CD4-positive, alpha-beta T cell (primary cell): ENCODE measurements at regions of chr1 and their contacts with region 1.

Region 1: DNA sequence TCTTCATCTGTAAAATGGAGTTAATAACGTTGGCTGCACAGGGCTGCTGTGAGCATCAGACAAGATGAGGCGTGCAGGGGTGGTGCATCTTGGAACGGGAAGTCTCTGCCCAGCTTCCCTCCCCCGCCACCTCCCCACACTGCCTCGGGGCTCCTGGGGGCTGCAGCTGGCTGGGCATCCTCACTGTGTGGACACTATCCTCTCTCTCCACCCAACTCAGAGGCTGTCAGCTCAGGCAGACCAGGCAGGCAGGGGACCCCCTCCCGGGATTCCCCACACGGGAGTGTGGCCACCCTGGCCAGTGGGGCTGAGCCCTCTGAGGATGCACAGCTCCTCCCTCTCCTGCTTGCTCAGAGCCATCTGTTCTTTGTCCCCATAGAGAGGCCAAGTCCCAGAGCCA is 122.7 kb downstream of the CCDC185 start:
- DNase-seq: peak in 3 of 14 experiments; percentile 5 to 28 (median 12)
- ATAC-seq: peak; percentile 47
- H3K4me3 ChIP-seq: peak overlapping the region; percentile 6
- H3K4me3 Mint-ChIP-seq: peak overlapping the region; percentile 71
- H3K27ac ChIP-seq: peak overlapping the region in 1 of 2 donors; percentile 30
- H3K27ac Mint-ChIP-seq: peak overlapping the region; percentile 89
- H3K4me1 ChIP-seq: peaks cover 41% of the 10 kb centered on the region
- H3K4me1 Mint-ChIP-seq: peaks cover 46% of the 10 kb centered on the region
- H3K27me3 ChIP-seq: no peaks in the 10 kb centered on the region
- H3K27me3 Mint-ChIP-seq: no peaks in the 10 kb centered on the region
- CTCF ChIP-seq: no peak

Region 2: DNA sequence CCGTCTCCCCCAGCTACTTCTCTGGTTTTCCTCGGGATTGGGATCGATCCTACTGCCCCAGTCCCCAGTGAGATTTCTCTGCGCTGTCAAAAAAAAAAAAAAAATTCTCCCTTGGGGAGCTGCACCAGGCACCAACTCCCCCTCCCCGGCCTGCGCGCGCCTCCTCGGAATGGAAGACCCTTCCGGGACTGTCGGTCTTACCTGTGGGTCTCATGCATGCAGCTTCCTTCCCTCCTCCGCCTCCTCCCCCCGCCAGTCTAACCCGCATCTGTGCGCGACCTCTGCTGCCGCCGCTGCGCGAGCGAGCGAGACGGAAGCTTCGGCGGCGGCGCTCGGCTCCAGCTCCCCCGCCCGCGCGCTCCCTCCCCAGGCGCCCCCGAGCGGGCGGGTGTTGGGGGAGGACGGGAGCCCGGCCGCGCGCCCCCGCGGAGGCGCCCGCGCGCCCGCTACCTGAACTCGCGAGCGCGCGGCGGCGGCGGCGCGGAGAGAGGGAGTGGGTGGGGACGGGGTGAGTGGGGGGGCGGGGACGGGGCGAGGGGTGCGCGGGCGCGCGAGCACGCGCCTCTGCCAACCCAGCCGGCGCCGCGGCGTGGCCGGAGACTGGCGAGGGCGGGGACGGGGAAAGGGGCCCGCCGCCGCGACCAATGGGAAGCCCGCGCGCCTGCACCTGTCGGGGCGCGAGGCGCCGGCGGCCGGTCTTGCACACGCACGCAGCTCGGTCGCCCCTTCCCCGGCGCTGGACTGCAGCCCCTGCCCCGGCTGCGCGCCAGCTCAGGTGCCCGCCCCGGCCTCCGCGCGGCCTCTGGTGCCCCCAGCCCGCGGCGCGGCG is 151.9 kb before region 1 on chr1 and contains the start of gene SUSD4:
- CTCF ChIA-PET with region 1: no interaction called
- POLR2A ChIA-PET with region 1: interaction called, 18 read pairs
- intact Hi-C with region 1: no loop called
- DNase-seq: peak; percentile 55 to 91 (median 76)
- ATAC-seq: peak; percentile 89
- H3K4me3 ChIP-seq: peak within 1 kb of the TSS; percentile 66
- H3K4me3 Mint-ChIP-seq: peak within 1 kb of the TSS; percentile 98
- H3K27ac ChIP-seq: no peak within 1 kb of the TSS
- H3K27ac Mint-ChIP-seq: peak within 1 kb of the TSS; percentile 82
- H3K4me1 ChIP-seq: peaks cover 22% of the 10 kb centered on the region
- H3K4me1 Mint-ChIP-seq: peaks cover 39% of the 10 kb centered on the region
- H3K27me3 ChIP-seq: peaks cover 0 to 4% of the 10 kb centered on the region in 2 experiments
- H3K27me3 Mint-ChIP-seq: no peaks in the 10 kb centered on the region
- CTCF ChIP-seq: no peak
- total RNA-seq, gene SUSD4: 13.0 to 13.8 TPM

Region 3: GRCh38 chr1:223531742-223532341 is 15.9 kb after region 1 on chr1:
- CTCF ChIA-PET with region 1: no interaction called
- POLR2A ChIA-PET with region 1: no interaction called
- intact Hi-C with region 1: no loop called
- DNase-seq: peak; percentile 4 to 56 (median 30)
- ATAC-seq: peak; percentile 26
- H3K4me3 ChIP-seq: no peak overlapping the region
- H3K4me3 Mint-ChIP-seq: no peak overlapping the region
- H3K27ac ChIP-seq: no peak overlapping the region
- H3K27ac Mint-ChIP-seq: no peak overlapping the region
- H3K4me1 ChIP-seq: peaks cover 2% of the 10 kb centered on the region
- H3K4me1 Mint-ChIP-seq: peaks cover 20% of the 10 kb centered on the region
- H3K27me3 ChIP-seq: no peaks in the 10 kb centered on the region
- H3K27me3 Mint-ChIP-seq: no peaks in the 10 kb centered on the region
- CTCF ChIP-seq: peak; percentile 46